ENCODE measurements at regions of chr18 and their contacts with region 1.

Region 1: DNA sequence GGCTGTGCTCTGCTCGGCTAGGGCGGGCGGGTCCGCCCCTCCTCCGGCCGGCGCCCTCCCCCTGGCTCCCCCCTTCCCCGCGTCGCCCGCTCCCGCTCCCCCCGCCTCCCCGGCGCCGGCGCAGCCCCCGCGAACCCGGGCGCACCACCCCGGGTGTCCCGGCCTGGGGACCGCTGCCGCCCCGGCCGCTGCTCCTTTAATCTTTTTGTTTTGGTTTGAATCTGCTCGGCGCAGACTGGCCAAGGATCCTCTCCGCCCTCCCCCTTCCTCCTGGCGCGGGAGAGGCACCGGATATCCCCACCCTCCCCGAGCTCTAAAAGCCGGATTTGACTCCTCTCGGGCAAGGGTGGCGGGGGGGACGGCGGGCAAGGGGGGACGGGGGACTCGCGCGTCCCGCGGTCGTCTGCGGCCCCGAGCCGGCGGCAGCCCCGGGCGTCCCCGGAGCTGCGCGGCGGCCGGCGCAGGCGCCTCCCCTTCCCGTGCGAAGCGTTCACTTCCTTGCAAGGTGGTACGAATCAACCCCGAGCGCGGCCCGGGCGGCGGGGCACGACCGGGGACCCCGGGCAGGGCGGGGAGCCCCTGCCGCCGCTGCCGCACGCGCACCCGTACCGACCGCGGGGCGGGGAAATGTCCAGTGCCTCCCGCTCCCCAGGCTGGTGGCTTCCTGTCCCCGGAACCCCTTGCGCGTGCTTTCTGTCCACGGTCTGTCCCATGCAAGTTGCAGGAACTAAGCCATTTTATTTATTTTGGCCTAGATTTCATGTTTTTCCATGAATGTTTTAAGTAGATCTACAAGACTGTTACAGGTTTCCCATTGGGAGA is at the start of gene PTGR3:
- DNase-seq: peak; percentile 78 to 89 (median 80)
- H3K4me3 ChIP-seq: peak within 1 kb of the TSS; percentile 91 to 96
- H3K4me3 Mint-ChIP-seq: peak within 1 kb of the TSS; percentile 96 to 100 (median 100)
- H3K27ac ChIP-seq: peak within 1 kb of the TSS; percentile 80
- H3K27ac Mint-ChIP-seq: peak within 1 kb of the TSS; percentile 93 to 99 (median 97)
- H3K4me1 ChIP-seq: peaks cover 62% of the 10 kb centered on the region
- H3K4me1 Mint-ChIP-seq: peaks cover 46 to 73% (median 56%) of the 10 kb centered on the region in 4 donors
- H3K27me3 ChIP-seq: no peaks in the 10 kb centered on the region
- H3K27me3 Mint-ChIP-seq: peaks cover 0 to 2% of the 10 kb centered on the region in 2 donors
- total RNA-seq, gene PTGR3: 55.9 to 56.7 TPM

Region 2: GRCh38 chr18:74370115-74370514 is 839.2 kb before region 1 on chr18:
- CTCF ChIA-PET with region 1: no interaction called
- POLR2A ChIA-PET with region 1: no interaction called
- intact Hi-C with region 1: loop called (anchors 2 kb)
- DNase-seq: no peak
- H3K4me3 ChIP-seq: no peak overlapping the region
- H3K4me3 Mint-ChIP-seq: no peak overlapping the region
- H3K27ac ChIP-seq: no peak overlapping the region
- H3K27ac Mint-ChIP-seq: peak overlapping the region in 5 of 7 donors; percentile 25 to 89 (median 77)
- H3K4me1 ChIP-seq: peaks cover 34% of the 10 kb centered on the region
- H3K4me1 Mint-ChIP-seq: peaks cover 29 to 49% (median 39%) of the 10 kb centered on the region in 4 donors
- H3K27me3 ChIP-seq: no peaks in the 10 kb centered on the region
- H3K27me3 Mint-ChIP-seq: peaks cover 7 to 8% of the 10 kb centered on the region in 2 donors

Region 3: GRCh38 chr18:74994502-74995419 is 214.6 kb before region 1 on chr18:
- CTCF ChIA-PET with region 1: no interaction called
- POLR2A ChIA-PET with region 1: interaction called, 6 read pairs
- intact Hi-C with region 1: loop called (anchors 5 kb)
- DNase-seq: peak; percentile 26 to 37 (median 36)
- H3K4me3 ChIP-seq: peak overlapping the region; percentile 2 to 42
- H3K4me3 Mint-ChIP-seq: peak overlapping the region; percentile 76 to 88 (median 82)
- H3K27ac ChIP-seq: peak overlapping the region; percentile 45
- H3K27ac Mint-ChIP-seq: peak overlapping the region; percentile 58 to 93 (median 85)
- H3K4me1 ChIP-seq: peaks cover 41% of the 10 kb centered on the region
- H3K4me1 Mint-ChIP-seq: peaks cover 34 to 59% (median 43%) of the 10 kb centered on the region in 4 donors
- H3K27me3 ChIP-seq: no peaks in the 10 kb centered on the region
- H3K27me3 Mint-ChIP-seq: no peaks in the 10 kb centered on the region

Region 4: DNA sequence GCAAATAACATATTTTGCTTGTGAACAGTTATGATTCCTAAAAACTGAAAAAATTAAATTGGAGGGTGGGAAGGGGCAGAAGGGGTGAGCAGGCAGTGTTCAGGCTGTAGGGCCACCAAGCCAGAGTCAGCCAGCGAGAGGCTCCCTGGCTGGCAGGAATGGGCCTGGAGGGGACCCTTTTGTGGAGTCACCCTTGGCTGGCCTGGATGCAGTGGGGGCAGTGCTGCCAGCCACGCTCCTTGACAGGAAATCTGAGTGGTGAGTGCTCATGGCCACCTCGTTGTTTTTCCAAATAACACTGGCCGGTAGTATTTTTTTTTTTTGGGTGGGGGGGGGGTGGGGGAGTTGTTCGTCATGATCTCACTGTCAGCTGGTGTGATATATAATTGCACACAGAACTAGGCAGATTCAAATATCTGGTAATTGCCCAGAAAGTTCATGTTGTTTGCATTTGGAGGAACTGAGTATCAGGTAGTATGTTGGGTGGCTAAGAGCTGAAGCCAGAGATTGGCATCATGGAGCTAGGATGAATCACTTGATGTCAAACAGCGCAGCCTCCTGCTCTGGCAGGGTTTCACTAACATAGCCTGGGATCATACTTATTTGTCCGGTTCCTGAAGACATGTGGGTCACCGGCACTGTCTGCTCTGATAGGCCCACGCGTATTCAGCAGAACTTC is 160.4 kb before region 1 on chr18:
- CTCF ChIA-PET with region 1: no interaction called
- POLR2A ChIA-PET with region 1: no interaction called
- intact Hi-C with region 1: no loop called
- DNase-seq: no peak
- H3K4me3 ChIP-seq: no peak overlapping the region
- H3K4me3 Mint-ChIP-seq: no peak overlapping the region
- H3K27ac ChIP-seq: no peak overlapping the region
- H3K27ac Mint-ChIP-seq: no peak overlapping the region
- H3K4me1 ChIP-seq: no peaks in the 10 kb centered on the region
- H3K4me1 Mint-ChIP-seq: peaks cover 0 to 3% (median 0%) of the 10 kb centered on the region in 4 donors
- H3K27me3 ChIP-seq: no peaks in the 10 kb centered on the region
- H3K27me3 Mint-ChIP-seq: no peaks in the 10 kb centered on the region

Region 5: GRCh38 chr18:75070625-75071483 is 138.5 kb before region 1 on chr18:
- CTCF ChIA-PET with region 1: no interaction called
- POLR2A ChIA-PET with region 1: interaction called, 38 read pairs
- intact Hi-C with region 1: loop called (anchors 1 kb)
- DNase-seq: peak; percentile 70 to 89 (median 74)
- H3K4me3 ChIP-seq: peak overlapping the region; percentile 51 to 58
- H3K4me3 Mint-ChIP-seq: peak overlapping the region; percentile 79 to 97 (median 90)
- H3K27ac ChIP-seq: peak overlapping the region; percentile 74
- H3K27ac Mint-ChIP-seq: peak overlapping the region; percentile 89 to 100 (median 99)
- H3K4me1 ChIP-seq: peaks cover 34% of the 10 kb centered on the region
- H3K4me1 Mint-ChIP-seq: peaks cover 35 to 57% (median 41%) of the 10 kb centered on the region in 4 donors
- H3K27me3 ChIP-seq: no peaks in the 10 kb centered on the region
- H3K27me3 Mint-ChIP-seq: no peaks in the 10 kb centered on the region

Region 6: GRCh38 chr18:75247611-75248421 is 38.5 kb after region 1 on chr18:
- CTCF ChIA-PET with region 1: interaction called, 22 read pairs
- POLR2A ChIA-PET with region 1: interaction called, 61 read pairs
- intact Hi-C with region 1: loop called (anchors 1 kb)
- DNase-seq: peak in 4 of 5 donors; percentile 51 to 61 (median 56)
- H3K4me3 ChIP-seq: peak overlapping the region; percentile 19 to 49
- H3K4me3 Mint-ChIP-seq: peak overlapping the region; percentile 80 to 91 (median 88)
- H3K27ac ChIP-seq: peak overlapping the region; percentile 46
- H3K27ac Mint-ChIP-seq: peak overlapping the region; percentile 88 to 98 (median 93)
- H3K4me1 ChIP-seq: peaks cover 51% of the 10 kb centered on the region
- H3K4me1 Mint-ChIP-seq: peaks cover 51 to 92% (median 70%) of the 10 kb centered on the region in 4 donors
- H3K27me3 ChIP-seq: no peaks in the 10 kb centered on the region
- H3K27me3 Mint-ChIP-seq: no peaks in the 10 kb centered on the region

Region 7: DNA sequence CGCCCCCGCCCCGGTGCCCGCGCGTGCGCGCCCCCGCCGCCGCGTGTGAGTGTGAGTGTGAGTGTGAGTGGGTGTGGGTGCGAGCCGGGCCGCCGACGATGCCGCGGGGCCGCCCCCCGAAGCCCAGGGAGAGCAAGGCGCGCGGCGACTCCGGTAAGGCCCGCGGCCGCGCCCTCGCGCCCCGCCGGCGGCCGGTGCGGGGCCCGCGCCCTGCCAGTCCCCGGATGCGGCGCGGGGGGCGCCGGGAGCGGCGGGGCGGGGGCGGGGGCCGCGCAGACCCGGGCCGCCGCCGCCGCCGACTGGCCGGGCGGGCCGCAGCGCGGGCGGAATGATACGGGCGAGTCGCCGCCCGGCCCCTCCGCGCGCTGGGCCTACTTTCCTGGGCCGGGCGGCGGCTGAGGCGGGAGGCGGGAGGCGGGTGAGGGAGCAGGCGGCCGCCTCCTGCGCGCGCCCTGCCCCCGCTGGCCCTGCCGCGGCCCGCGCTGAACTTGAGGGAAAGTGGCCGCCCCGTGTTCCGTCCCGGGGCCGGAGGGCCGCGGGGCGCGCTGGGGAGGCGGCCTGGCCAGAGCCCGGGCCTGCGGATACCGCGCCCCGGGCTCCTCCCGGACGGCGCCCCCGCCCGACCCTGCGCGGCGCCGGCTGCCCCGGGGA is 1613.3 kb after region 1 on chr18 and contains the start of gene ZNF236:
- CTCF ChIA-PET with region 1: no interaction called
- POLR2A ChIA-PET with region 1: no interaction called
- intact Hi-C with region 1: loop called (anchors 10 kb)
- DNase-seq: peak; percentile 61 to 74 (median 70)
- H3K4me3 ChIP-seq: peak within 1 kb of the TSS; percentile 93 to 98
- H3K4me3 Mint-ChIP-seq: peak within 1 kb of the TSS; percentile 91 to 97 (median 95)
- H3K27ac ChIP-seq: peak within 1 kb of the TSS; percentile 88
- H3K27ac Mint-ChIP-seq: peak within 1 kb of the TSS; percentile 92 to 97 (median 97)
- H3K4me1 ChIP-seq: peaks cover 47% of the 10 kb centered on the region
- H3K4me1 Mint-ChIP-seq: peaks cover 33 to 69% (median 54%) of the 10 kb centered on the region in 4 donors
- H3K27me3 ChIP-seq: no peaks in the 10 kb centered on the region
- H3K27me3 Mint-ChIP-seq: no peaks in the 10 kb centered on the region
- total RNA-seq, gene ZNF236: 28.3 to 29.1 TPM

Measured in CD4-positive, alpha-beta memory T cell (primary cell).